Activated CD4-positive, alpha-beta T cell treated with anti-CD3 and anti-CD28 coated beads, Interleukin-2, amount 10 ng/mL, durations not matched to agents 7 days and 5 days (primary cell): ENCODE measurements at regions of chr6 and their contacts with region 1.

Region 1: DNA sequence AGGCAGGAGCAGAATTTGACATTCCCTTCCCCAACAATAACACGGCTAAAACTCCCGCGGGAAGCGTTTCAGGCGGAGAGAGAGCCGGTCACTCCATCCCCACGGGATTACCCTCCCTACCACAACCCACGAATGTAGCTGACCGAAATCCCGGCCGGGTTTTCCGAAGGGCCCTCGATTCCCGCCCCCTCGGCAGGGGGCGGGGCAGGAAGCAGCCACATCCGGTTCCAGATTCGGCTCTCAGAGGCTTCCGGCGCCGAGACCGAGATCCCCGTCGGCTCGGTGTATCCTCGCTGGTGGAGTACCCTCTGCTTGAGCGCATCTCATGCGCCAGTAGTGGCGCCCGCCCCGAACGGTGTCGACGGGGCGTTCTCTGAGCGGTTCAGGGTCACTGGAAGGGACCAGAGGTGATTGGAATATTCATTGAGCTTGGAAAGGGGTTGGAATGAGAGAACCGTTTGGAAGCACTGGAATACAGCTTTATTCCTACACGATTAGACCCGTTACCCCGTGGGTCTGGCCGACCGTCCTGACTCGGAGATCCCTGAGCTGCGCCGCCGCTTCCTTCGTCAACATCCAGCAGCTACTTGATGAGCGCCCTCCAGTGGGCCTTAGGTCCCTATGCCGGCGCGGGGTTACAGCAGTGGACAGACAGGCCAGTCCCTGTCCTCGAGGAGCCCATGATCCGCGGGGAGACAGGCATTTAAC is 649 bp upstream of the RGL2 start:
- DNase-seq: peak; percentile 96
- H3K4me3 Mint-ChIP-seq: peak overlapping the region; percentile 93
- H3K27ac Mint-ChIP-seq: peak overlapping the region; percentile 98
- H3K4me1 Mint-ChIP-seq: peaks cover 44% of the 10 kb centered on the region
- H3K27me3 Mint-ChIP-seq: no peaks in the 10 kb centered on the region

Region 2: DNA sequence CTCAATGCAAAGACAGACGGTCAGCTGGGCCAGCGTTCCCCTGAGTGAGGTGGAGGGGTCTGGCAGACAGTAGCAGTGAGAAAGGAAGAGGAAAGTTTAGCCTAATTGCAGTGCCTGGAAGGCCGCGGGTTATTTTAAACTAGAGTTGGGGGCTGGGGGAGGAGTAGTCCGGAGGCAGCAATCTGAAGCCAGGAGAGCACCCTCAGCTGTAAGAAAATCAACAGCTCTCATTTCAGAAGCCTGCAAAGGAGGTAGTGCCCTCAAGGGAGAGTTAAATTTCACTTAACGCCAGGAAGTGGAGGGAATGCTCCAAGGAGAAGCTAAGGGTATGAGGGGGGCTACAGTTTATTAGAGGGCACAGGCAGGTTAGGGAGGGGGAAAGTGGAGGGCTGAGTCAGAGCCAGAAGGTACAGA is 64.2 kb before region 1 on chr6:
- CTCF ChIA-PET with region 1: no interaction called
- POLR2A ChIA-PET with region 1: no interaction called
- DNase-seq: no peak
- H3K4me3 Mint-ChIP-seq: no peak overlapping the region
- H3K27ac Mint-ChIP-seq: no peak overlapping the region
- H3K4me1 Mint-ChIP-seq: no peaks in the 10 kb centered on the region
- H3K27me3 Mint-ChIP-seq: peaks cover 37% of the 10 kb centered on the region

Region 3: DNA sequence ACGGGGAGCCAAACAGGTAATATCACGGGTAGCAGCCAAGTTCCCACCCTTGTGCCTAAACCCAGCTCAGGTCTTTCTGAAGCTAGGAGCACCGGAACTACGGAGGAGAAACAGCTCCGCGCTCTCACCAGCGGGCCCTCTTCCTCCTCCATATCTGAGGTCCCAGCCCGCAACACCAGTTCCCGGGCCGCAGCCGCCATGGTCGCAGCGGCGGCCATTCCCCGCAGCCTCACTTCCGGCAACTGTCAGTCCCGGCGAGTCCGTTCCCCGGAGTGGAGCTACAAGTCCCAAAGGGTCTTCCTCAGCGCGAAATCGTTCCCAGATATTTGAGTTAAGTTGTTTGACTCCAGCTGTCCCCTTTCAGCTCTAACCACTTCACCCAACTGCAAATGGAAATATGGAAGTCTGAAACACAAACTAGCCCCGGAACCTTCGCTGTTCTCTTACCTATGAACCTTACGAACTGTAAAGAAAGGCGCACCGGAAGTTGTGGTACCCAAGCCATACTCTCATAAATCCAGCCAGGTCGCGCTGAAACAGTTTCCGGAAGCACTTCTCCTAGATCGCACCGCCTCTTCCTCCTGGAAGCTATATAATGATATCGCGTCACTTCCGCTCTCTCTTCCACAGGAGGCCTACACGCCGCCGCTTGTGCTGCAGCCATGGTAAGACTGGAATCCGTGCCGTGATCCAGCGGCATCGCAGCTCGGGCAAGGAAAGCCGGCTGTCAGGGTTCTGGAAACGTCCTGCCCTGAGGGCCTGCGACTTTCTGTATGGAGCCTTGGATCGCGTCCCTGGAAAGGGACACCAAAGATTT is 27.7 kb before region 1 on chr6 and contains the starts of genes RPS18 and VPS52:
- CTCF ChIA-PET with region 1: interaction called, 11 read pairs
- POLR2A ChIA-PET with region 1: interaction called, 11 read pairs
- DNase-seq: peak; percentile 96
- H3K4me3 Mint-ChIP-seq: peak within 1 kb of the TSS; percentile 95
- H3K27ac Mint-ChIP-seq: peak within 1 kb of the TSS; percentile 98
- H3K4me1 Mint-ChIP-seq: peaks cover 61% of the 10 kb centered on the region
- H3K27me3 Mint-ChIP-seq: no peaks in the 10 kb centered on the region
- total RNA-seq, gene RPS18: 2,438 to 3,135 TPM
- total RNA-seq, gene VPS52: 79.1 to 84.0 TPM

Region 4: DNA sequence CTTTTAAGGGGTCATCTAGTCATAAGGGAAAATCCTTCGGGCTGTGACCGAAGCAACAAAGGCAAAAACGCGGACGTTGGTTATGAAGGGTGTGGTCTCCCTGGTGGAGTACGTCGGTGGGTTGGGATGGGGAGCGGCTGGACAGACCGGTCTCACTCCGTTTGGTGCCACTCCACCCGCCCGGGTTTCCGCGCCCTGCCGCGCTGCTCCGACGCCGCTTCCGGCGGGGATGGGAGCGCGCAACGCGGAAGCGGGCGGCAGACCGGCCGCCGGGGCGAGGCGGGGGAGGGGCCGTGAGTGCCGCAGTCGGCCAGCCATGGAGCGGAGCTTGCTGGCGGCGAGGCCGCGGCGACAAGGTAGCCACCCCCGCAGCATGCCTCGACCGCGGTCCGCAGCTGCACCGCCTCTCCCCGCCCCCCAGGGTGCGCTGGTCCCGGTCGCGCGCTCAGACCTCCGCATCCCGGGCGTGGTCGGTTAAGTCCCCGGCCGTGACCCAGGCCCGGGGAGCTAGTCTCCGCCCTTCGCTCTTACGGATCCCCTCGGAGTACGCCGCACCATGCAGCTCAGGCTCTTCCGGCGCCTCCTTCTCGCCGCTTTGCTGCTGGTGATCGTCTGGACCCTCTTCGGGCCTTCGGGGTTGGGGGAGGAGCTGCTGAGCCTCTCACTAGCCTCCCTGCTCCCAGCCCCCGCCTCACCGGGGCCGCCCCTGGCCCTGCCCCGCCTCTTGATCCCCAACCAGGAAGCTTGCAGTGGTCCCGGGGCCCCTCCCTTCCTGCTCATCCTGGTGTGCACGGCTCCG is 22.3 kb before region 1 on chr6 and contains the start of gene B3GALT4:
- CTCF ChIA-PET with region 1: interaction called, 11 read pairs
- POLR2A ChIA-PET with region 1: interaction called, 11 read pairs
- DNase-seq: peak; percentile 79
- H3K4me3 Mint-ChIP-seq: peak within 1 kb of the TSS; percentile 95
- H3K27ac Mint-ChIP-seq: peak within 1 kb of the TSS; percentile 97
- H3K4me1 Mint-ChIP-seq: peaks cover 69% of the 10 kb centered on the region
- H3K27me3 Mint-ChIP-seq: no peaks in the 10 kb centered on the region
- total RNA-seq, gene B3GALT4: 18.3 to 21.5 TPM

Region 5: GRCh38 chr6:33312409-33313158 is 13.2 kb after region 1 on chr6:
- CTCF ChIA-PET with region 1: interaction called, 11 read pairs
- POLR2A ChIA-PET with region 1: no interaction called
- DNase-seq: peak; percentile 91
- H3K4me3 Mint-ChIP-seq: peak overlapping the region; percentile 99
- H3K27ac Mint-ChIP-seq: peak overlapping the region; percentile 96
- H3K4me1 Mint-ChIP-seq: peaks cover 53% of the 10 kb centered on the region
- H3K27me3 Mint-ChIP-seq: no peaks in the 10 kb centered on the region

Region 6: GRCh38 chr6:33317669-33318425 is 18.5 kb after region 1 on chr6 and contains the start of gene ZBTB22:
- CTCF ChIA-PET with region 1: interaction called, 11 read pairs
- POLR2A ChIA-PET with region 1: no interaction called
- DNase-seq: peak; percentile 98
- H3K4me3 Mint-ChIP-seq: peak within 1 kb of the TSS; percentile 99
- H3K27ac Mint-ChIP-seq: peak within 1 kb of the TSS; percentile 96
- H3K4me1 Mint-ChIP-seq: peaks cover 74% of the 10 kb centered on the region
- H3K27me3 Mint-ChIP-seq: no peaks in the 10 kb centered on the region
- total RNA-seq, gene ZBTB22: 15.8 to 16.9 TPM

Region 7: GRCh38 chr6:33333666-33334065 is 34.3 kb after region 1 on chr6:
- CTCF ChIA-PET with region 1: interaction called, 3 read pairs
- POLR2A ChIA-PET with region 1: interaction called, 14 read pairs
- DNase-seq: no peak
- H3K4me3 Mint-ChIP-seq: no peak overlapping the region
- H3K27ac Mint-ChIP-seq: no peak overlapping the region
- H3K4me1 Mint-ChIP-seq: peaks cover 20% of the 10 kb centered on the region
- H3K27me3 Mint-ChIP-seq: no peaks in the 10 kb centered on the region

Region 8: DNA sequence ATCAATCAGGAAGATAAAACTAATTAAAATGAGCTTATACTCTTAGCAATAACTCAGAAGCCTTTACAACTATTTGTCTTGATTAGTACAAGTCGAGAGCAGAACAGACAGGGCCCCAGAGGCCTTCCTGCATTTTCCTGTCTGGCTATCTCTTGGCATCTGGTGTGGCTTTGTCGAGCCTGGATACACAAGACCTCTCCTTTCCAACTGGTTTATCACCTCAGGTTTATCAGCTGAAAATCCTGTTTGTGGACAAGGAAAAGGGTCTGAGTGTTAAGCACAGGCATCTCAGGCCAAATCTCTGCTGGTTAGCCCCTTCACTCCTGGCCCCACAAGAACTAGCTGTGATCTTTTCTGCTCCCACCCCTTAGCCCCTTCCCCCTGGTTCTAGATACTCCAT is 248.1 kb after region 1 on chr6:
- CTCF ChIA-PET with region 1: no interaction called
- POLR2A ChIA-PET with region 1: no interaction called
- DNase-seq: no peak
- H3K4me3 Mint-ChIP-seq: peak overlapping the region; percentile 30
- H3K27ac Mint-ChIP-seq: peak overlapping the region; percentile 90
- H3K4me1 Mint-ChIP-seq: peaks cover 32% of the 10 kb centered on the region
- H3K27me3 Mint-ChIP-seq: no peaks in the 10 kb centered on the region